ENCODE measurements at regions of chr9 and their contacts with region 1.

Region 1: GRCh38 chr9:135718616-135719015 is 16.6 kb downstream of the KCNT1 start:
- DNase-seq: peak; percentile 20
- H3K4me3 ChIP-seq: no peak overlapping the region
- H3K27ac ChIP-seq: no peak overlapping the region
- H3K4me1 ChIP-seq: no peaks in the 10 kb centered on the region
- H3K27me3 ChIP-seq: peaks cover 16% of the 10 kb centered on the region
- CTCF ChIP-seq: no peak

Region 2: GRCh38 chr9:135551031-135551430 is 167.6 kb before region 1 on chr9:
- CTCF ChIA-PET with region 1: no interaction called
- dilution Hi-C with region 1: loop called (anchors 5 kb)
- in situ Hi-C with region 1: no loop called
- intact Hi-C with region 1: no loop called
- DNase-seq: no peak
- H3K4me3 ChIP-seq: no peak overlapping the region
- H3K27ac ChIP-seq: no peak overlapping the region
- H3K4me1 ChIP-seq: no peaks in the 10 kb centered on the region
- H3K27me3 ChIP-seq: no peaks in the 10 kb centered on the region
- CTCF ChIP-seq: no peak

Region 3: GRCh38 chr9:135736272-135736978 is 17.8 kb after region 1 on chr9:
- CTCF ChIA-PET with region 1: no interaction called
- dilution Hi-C with region 1: no loop called
- in situ Hi-C with region 1: no loop called
- intact Hi-C with region 1: no loop called
- DNase-seq: no peak
- H3K4me3 ChIP-seq: no peak overlapping the region
- H3K27ac ChIP-seq: no peak overlapping the region
- H3K4me1 ChIP-seq: no peaks in the 10 kb centered on the region
- H3K27me3 ChIP-seq: peaks cover 15% of the 10 kb centered on the region
- CTCF ChIP-seq: no peak

Region 4: GRCh38 chr9:135770203-135770535 is 51.6 kb after region 1 on chr9:
- CTCF ChIA-PET with region 1: no interaction called
- dilution Hi-C with region 1: no loop called
- in situ Hi-C with region 1: no loop called
- intact Hi-C with region 1: no loop called
- DNase-seq: no peak
- H3K4me3 ChIP-seq: no peak overlapping the region
- H3K27ac ChIP-seq: no peak overlapping the region
- H3K4me1 ChIP-seq: no peaks in the 10 kb centered on the region
- H3K27me3 ChIP-seq: no peaks in the 10 kb centered on the region
- CTCF ChIP-seq: no peak

Region 5: DNA sequence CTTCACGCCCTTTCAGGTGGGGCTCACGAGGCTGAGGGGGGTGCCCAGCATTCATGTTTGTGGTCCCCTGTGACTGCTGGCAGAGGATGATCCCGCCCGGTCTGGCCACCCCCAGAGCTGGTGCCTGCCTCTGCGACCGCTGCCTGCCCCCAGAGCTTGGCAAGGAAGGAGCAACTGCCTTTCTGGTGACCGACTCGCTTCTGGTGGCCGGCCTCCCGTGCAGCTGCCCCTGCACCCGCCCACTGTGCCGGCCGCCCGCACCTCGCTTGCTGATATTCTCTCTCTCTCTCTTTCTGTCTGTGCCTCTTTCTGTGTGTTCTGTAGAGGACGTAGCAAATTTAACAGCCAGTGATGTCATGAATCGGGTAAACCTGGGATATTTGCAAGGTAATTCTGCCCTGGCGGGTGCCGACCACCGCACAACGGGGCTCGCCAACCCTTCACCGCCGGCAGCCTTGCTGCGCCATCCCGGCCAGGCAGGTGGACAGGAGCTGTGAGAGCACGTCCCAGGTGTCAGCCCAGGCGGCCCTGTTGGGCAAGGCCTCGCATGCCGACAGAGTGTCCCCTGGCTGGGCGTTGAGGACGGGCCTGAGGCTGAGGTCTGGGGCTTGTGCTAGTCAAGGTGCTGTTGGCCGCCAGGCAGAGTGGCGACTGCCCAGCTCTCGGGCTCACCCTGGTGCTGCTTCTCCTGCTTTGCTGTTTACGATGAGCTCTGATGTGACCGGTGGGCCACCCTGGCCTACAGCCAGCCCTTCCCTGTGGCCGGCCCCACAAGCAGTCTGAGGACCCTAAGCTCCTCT is 69.4 kb after region 1 on chr9:
- CTCF ChIA-PET with region 1: no interaction called
- dilution Hi-C with region 1: loop called (anchors 5 kb)
- in situ Hi-C with region 1: no loop called
- intact Hi-C with region 1: no loop called
- DNase-seq: no peak
- H3K4me3 ChIP-seq: no peak overlapping the region
- H3K27ac ChIP-seq: no peak overlapping the region
- H3K4me1 ChIP-seq: no peaks in the 10 kb centered on the region
- H3K27me3 ChIP-seq: no peaks in the 10 kb centered on the region
- CTCF ChIP-seq: no peak

Region 6: DNA sequence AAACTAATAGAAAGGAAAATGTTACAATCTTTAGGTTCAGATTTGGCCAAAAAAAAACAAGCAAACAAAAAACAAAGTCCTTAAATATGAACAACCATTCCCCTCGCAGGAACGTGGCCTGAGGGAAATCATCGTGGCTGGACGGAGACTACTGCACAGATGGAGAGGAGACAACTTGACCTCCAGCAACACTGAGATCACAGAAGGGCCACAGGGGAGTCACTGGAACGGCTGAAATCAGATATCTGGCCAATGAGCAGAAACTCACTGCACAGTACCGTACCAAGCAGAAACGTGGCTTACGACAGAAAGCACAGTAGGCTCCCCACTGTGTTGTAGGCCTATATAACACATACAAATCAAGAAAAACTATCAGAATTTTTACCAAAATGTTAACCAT is 161.0 kb after region 1 on chr9:
- CTCF ChIA-PET with region 1: no interaction called
- dilution Hi-C with region 1: no loop called
- in situ Hi-C with region 1: no loop called
- intact Hi-C with region 1: no loop called
- DNase-seq: no peak
- H3K4me3 ChIP-seq: no peak overlapping the region
- H3K27ac ChIP-seq: no peak overlapping the region
- H3K4me1 ChIP-seq: peaks cover 1% of the 10 kb centered on the region
- H3K27me3 ChIP-seq: no peaks in the 10 kb centered on the region
- CTCF ChIP-seq: no peak

Region 7: DNA sequence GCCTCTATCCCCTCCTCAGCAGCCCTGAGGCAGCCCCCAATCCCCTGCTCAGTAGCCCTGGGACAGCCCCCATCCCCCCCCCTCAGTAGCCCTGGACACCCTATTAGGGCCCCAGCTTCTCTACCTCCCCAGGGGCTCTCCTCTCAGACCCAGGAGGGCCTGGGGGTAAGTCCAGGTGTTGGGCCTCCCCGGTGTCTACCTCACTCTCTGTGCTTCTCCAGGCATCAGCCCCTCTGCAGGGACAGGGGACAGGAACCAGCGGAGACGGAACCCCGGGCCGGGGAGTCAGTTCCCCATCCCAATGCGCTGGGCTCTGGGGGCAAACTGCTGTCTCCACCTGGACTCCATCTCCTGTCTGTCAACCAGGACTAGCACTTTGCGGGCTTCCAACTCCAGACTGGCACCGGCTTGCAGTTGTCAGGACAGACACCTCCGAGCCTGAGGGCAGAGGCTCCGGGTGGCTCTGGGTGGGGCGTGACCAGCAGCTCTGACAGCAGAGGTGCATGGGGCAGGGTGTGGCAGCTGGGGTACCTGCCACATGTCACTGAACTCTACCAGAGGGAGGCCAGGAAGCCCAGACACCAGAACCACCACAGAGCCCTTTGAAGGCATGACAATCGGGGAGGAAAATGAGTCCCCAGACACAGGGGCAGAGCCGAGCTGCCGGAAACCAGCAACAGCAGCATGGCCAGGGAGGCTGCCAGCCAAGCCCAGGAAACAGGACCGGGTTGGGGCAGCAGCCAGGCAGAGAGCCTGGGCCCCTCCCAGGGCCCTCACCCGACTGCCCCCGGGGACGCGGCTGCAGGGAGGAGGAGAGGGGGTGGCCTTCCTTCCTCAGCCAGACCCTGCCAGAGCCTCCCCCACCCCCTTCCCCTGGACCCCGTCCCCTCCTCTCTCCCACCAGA is 260.3 kb after region 1 on chr9:
- CTCF ChIA-PET with region 1: no interaction called
- dilution Hi-C with region 1: loop called (anchors 5 kb)
- in situ Hi-C with region 1: no loop called
- intact Hi-C with region 1: no loop called
- DNase-seq: no peak
- H3K4me3 ChIP-seq: no peak overlapping the region
- H3K27ac ChIP-seq: no peak overlapping the region
- H3K4me1 ChIP-seq: peaks cover 6% of the 10 kb centered on the region
- H3K27me3 ChIP-seq: peaks cover 2% of the 10 kb centered on the region
- CTCF ChIP-seq: no peak

Measured in mammary epithelial cell (primary cell).